Left ventricle myocardium inferior (tissue), 1 donor: ENCODE measurements at regions of chr3 and their contacts with region 1.

Region 1: GRCh38 chr3:146326670-146327543 is 76.0 kb upstream of the PLSCR4 start:
- DNase-seq: no peak
- H3K4me3 ChIP-seq: no peak overlapping the region
- H3K27ac ChIP-seq: no peak overlapping the region
- H3K4me1 ChIP-seq: no peaks in the 10 kb centered on the region
- H3K27me3 ChIP-seq: no peaks in the 10 kb centered on the region
- CTCF ChIP-seq: peak; percentile 64

Region 2: GRCh38 chr3:146218880-146219866 is 107.7 kb before region 1 on chr3:
- intact Hi-C with region 1: loop called (anchors 2 kb)
- DNase-seq: no peak
- H3K4me3 ChIP-seq: no peak overlapping the region
- H3K27ac ChIP-seq: no peak overlapping the region
- H3K4me1 ChIP-seq: peaks cover 43% of the 10 kb centered on the region
- H3K27me3 ChIP-seq: no peaks in the 10 kb centered on the region
- CTCF ChIP-seq: peak; percentile 78